ENCODE measurements at regions of chr3 and their contacts with region 1.

Region 1: GRCh38 chr3:146589899-146590508 is 15.1 kb downstream of the PLSCR5 start:
- DNase-seq: no peak
- H3K4me3 ChIP-seq: no peak overlapping the region
- H3K27ac ChIP-seq: no peak overlapping the region
- H3K4me1 ChIP-seq: no peaks in the 10 kb centered on the region
- H3K27me3 ChIP-seq: no peaks in the 10 kb centered on the region
- CTCF ChIP-seq: peak; percentile 41 to 47 (median 42)
- EP300 ChIP-seq: no peak
- POLR2A ChIP-seq: no peak

Region 2: GRCh38 chr3:146454796-146455195 is 135.2 kb before region 1 on chr3:
- intact Hi-C with region 1: no loop called
- DNase-seq: no peak
- H3K4me3 ChIP-seq: no peak overlapping the region
- H3K27ac ChIP-seq: no peak overlapping the region
- H3K4me1 ChIP-seq: no peaks in the 10 kb centered on the region
- H3K27me3 ChIP-seq: no peaks in the 10 kb centered on the region
- CTCF ChIP-seq: no peak
- EP300 ChIP-seq: no peak
- POLR2A ChIP-seq: no peak

Region 3: GRCh38 chr3:146569314-146569713 is 20.7 kb before region 1 on chr3:
- intact Hi-C with region 1: no loop called
- DNase-seq: no peak
- H3K4me3 ChIP-seq: no peak overlapping the region
- H3K27ac ChIP-seq: no peak overlapping the region
- H3K4me1 ChIP-seq: no peaks in the 10 kb centered on the region
- H3K27me3 ChIP-seq: no peaks in the 10 kb centered on the region
- CTCF ChIP-seq: no peak
- EP300 ChIP-seq: no peak
- POLR2A ChIP-seq: no peak

Region 4: DNA sequence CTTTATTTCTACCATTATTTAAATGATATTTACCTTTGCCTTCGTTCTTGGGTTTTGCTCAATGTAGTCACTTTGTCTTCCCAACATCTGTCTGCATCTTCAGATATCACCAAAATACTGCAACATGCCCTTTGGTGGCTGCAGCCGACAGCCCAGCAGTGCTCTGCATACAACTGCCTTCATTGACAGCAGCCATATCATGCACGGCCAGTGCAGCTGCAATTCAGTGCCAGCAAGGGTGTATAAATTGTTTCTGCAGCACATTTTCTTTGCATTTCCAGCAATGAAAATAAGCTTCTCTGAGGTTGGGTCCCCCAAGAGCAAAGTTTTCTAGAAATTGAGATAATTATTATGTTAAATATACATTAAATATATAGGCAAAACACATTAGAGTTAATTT is 21.1 kb after region 1 on chr3:
- intact Hi-C with region 1: loop called (anchors 2 kb)
- DNase-seq: no peak
- H3K4me3 ChIP-seq: no peak overlapping the region
- H3K27ac ChIP-seq: no peak overlapping the region
- H3K4me1 ChIP-seq: peaks cover 0 to 12% (median 4%) of the 10 kb centered on the region in 4 donors
- H3K27me3 ChIP-seq: no peaks in the 10 kb centered on the region
- CTCF ChIP-seq: no peak
- EP300 ChIP-seq: no peak
- POLR2A ChIP-seq: no peak

Region 5: GRCh38 chr3:146640955-146641867 is 51.2 kb after region 1 on chr3:
- intact Hi-C with region 1: loop called (anchors 1 kb)
- DNase-seq: no peak
- H3K4me3 ChIP-seq: no peak overlapping the region
- H3K27ac ChIP-seq: no peak overlapping the region
- H3K4me1 ChIP-seq: peaks cover 0 to 4% (median 0%) of the 10 kb centered on the region in 4 donors
- H3K27me3 ChIP-seq: no peaks in the 10 kb centered on the region
- CTCF ChIP-seq: peak; percentile 53 to 61 (median 56)
- EP300 ChIP-seq: no peak
- POLR2A ChIP-seq: no peak

Measured in sigmoid colon (tissue), 7 donors.